ENCODE measurements at regions of chr3 and their contacts with region 1.

Region 1: DNA sequence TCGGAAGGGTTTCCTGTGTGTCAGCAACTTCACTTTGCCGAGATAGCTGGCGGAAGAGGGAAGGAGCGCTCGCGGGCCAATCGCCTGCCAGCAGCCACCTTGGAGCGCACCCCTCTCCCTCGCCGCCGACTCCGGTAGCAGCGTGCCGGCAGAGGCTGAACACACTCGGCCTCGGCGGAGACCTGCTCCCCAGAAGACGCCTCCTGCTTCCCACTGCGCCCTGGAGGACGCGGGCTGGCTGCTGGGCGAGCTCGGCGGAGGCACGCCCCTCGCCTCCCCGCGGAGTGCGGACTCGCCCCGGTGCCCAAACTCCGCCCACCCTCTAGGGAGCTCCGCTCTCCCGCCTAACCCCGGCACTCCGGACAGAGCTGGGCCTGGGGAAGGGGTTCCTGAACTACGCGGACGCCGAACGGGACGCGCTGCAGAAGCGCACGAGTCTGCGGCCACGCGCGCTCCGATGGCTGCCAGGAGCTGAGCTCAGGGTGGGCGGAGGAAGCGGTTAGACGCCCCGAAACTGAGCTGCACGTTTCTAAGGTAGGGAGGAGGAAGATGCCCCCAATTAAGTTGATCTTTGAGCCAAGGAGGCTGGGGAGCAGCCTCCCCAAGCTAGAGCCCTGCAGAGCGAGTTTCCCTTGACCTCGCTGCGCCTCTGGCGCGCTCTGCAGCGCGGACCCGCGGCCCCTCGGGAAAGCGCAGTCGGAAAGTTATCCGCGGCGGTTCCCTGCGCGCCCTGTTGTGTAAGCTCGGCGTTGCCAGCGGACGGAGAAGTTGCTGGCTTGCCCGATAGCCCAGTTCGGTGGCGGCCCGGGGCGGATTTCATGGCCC is at the start of gene P2RY1:
- DNase-seq: peak; percentile 33
- H3K4me3 Mint-ChIP-seq: peak within 1 kb of the TSS; percentile 88
- H3K27ac Mint-ChIP-seq: peak within 1 kb of the TSS; percentile 81
- H3K4me1 Mint-ChIP-seq: peaks cover 16% of the 10 kb centered on the region
- H3K27me3 Mint-ChIP-seq: peaks cover 56% of the 10 kb centered on the region
- total RNA-seq, gene P2RY1: 1.7 and 2.1 TPM in 2 replicates

Region 2: DNA sequence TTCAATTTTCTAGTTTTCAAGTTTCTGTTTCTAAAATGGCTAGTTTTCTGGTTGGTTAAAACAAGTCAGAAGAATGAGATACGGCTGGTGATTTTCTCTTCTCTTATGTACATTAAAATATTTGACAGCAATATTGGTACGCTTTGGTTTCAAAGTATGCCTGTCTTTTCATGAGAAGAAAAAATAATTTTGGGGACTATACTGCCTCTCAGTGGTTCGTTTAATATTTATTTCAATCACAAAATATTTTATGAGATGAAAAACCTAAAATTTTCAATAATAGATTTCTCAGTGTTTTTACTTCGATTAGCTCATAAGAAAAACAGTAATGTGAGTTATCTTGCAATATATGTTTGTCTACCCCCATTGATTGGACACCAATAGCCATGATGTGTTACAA is 1174.1 kb before region 1 on chr3:
- intact Hi-C with region 1: no loop called
- DNase-seq: no peak
- H3K4me3 Mint-ChIP-seq: no peak overlapping the region
- H3K27ac Mint-ChIP-seq: no peak overlapping the region
- H3K4me1 Mint-ChIP-seq: no peaks in the 10 kb centered on the region
- H3K27me3 Mint-ChIP-seq: no peaks in the 10 kb centered on the region

Region 3: GRCh38 chr3:152737021-152737908 is 97.7 kb before region 1 on chr3:
- intact Hi-C with region 1: loop called (anchors 10 kb)
- DNase-seq: peak; percentile 15
- H3K4me3 Mint-ChIP-seq: no peak overlapping the region
- H3K27ac Mint-ChIP-seq: no peak overlapping the region
- H3K4me1 Mint-ChIP-seq: peaks cover 17% of the 10 kb centered on the region
- H3K27me3 Mint-ChIP-seq: peaks cover 21% of the 10 kb centered on the region

Region 4: DNA sequence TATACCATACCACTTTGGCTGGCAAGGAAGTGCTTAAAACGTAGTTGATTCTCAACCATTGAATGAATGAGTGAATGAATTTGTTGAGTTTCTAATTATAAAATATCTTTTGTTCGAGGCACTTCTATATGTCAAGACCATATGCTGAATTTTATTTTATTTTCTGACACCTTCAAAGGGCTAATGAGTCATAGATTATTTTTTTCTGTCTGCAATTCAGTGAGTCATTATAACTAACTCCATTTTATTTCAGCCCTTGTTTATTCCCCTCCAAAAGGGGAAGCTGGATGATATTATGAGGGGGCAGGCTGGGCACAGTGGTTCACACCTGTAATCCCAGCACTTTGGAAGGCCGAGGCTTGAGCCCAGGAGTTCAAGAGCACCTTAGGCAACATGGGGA is 142.4 kb after region 1 on chr3:
- intact Hi-C with region 1: no loop called
- DNase-seq: no peak
- H3K4me3 Mint-ChIP-seq: no peak overlapping the region
- H3K27ac Mint-ChIP-seq: no peak overlapping the region
- H3K4me1 Mint-ChIP-seq: no peaks in the 10 kb centered on the region
- H3K27me3 Mint-ChIP-seq: no peaks in the 10 kb centered on the region

Region 5: DNA sequence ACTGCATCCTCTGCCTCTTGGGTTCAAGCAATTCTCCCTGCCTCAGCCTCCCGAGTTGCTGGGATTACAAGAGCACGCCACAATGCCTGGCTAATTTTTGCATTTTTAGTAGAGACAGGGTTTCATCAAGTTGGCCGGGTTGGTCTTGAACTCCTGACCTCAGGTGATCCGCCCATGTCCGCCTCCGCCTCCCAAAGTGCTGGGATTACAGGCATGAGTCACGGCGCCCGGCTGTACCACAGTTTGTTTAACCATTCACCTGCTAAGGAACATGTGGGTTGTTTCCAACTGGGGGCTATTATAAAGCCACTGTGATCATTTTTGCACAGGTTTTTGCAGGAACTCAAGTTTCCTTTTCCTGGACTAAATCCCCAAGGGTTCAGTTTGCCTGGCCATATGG is 203.8 kb after region 1 on chr3:
- intact Hi-C with region 1: no loop called
- DNase-seq: no peak
- H3K4me3 Mint-ChIP-seq: no peak overlapping the region
- H3K27ac Mint-ChIP-seq: no peak overlapping the region
- H3K4me1 Mint-ChIP-seq: peaks cover 8% of the 10 kb centered on the region
- H3K27me3 Mint-ChIP-seq: no peaks in the 10 kb centered on the region

Region 6: GRCh38 chr3:153835540-153835939 is 1000.6 kb after region 1 on chr3:
- intact Hi-C with region 1: no loop called
- DNase-seq: no peak
- H3K4me3 Mint-ChIP-seq: no peak overlapping the region
- H3K27ac Mint-ChIP-seq: no peak overlapping the region
- H3K4me1 Mint-ChIP-seq: no peaks in the 10 kb centered on the region
- H3K27me3 Mint-ChIP-seq: peaks cover 1% of the 10 kb centered on the region